ENCODE measurements at regions of chr13 and their contacts with region 1.

Region 1: GRCh38 chr13:103006641-103007426 is 59.4 kb downstream of the SLC10A2 start:
- DNase-seq: no peak
- ATAC-seq: peak; percentile 83
- H3K4me3 Mint-ChIP-seq: peak overlapping the region; percentile 70
- H3K27ac Mint-ChIP-seq: peak overlapping the region; percentile 83
- H3K4me1 Mint-ChIP-seq: peaks cover 30% of the 10 kb centered on the region
- H3K27me3 Mint-ChIP-seq: no peaks in the 10 kb centered on the region
- CTCF ChIP-seq: no peak

Region 2: DNA sequence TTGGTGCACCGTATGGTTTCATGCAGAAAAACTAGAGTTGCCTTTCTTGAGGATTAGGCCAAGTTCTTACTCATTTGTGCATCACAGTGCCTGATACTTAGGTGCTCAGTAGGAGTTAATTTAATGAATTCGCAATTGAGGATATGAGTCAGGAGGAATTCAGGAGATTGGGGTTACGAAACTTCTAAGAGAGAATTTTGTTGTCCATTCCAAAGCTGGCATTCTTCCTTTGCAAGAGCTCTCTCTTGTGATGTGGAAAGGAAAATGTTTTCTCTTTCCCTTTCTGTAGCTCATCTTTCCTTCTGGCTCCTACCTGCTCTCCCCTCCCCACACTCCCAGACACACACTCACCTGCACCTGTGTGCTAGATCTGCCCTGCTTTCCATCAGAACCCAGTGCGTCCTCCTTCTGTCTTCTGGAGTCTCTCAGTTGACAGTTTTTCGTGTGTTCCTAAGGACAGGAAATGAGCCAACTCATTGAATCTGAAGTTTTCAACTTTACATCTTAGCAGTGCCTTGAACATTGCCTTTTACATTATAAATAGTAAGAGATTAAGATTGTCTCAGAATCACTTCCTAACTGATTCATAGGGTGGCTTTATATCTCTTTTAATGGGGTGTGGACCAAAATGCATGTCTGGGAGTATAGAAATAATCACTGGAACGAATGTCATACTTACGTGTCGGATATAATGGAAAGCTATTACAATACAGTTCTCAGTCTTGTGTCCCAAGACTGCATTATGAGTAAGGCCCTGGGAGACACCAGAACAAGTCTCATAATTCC is 180.7 kb before region 1 on chr13:
- CTCF ChIA-PET with region 1: no interaction called
- POLR2A ChIA-PET with region 1: no interaction called
- intact Hi-C with region 1: no loop called
- DNase-seq: no peak
- ATAC-seq: no peak
- H3K4me3 Mint-ChIP-seq: no peak overlapping the region
- H3K27ac Mint-ChIP-seq: no peak overlapping the region
- H3K4me1 Mint-ChIP-seq: no peaks in the 10 kb centered on the region
- H3K27me3 Mint-ChIP-seq: no peaks in the 10 kb centered on the region
- CTCF ChIP-seq: no peak

Region 3: DNA sequence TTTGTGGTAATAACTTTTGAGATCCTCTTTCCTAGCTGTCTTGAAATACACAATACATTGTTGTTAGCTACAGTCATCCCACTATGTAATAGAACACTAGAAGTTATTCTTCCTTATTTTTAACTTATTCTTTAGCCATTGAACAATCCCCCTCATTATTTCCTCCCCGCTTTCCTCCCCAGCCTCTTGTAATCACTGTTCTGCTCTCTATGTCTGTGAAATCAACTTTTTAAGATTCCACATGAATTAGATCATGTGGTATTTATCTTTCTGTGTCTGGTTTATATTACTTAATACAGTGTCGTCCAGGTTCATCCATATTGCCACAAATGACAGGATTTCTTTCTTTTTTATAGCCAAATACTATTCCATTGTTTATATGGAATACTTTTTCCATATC is 13.5 kb before region 1 on chr13:
- CTCF ChIA-PET with region 1: no interaction called
- POLR2A ChIA-PET with region 1: no interaction called
- intact Hi-C with region 1: no loop called
- DNase-seq: no peak
- ATAC-seq: no peak
- H3K4me3 Mint-ChIP-seq: no peak overlapping the region
- H3K27ac Mint-ChIP-seq: no peak overlapping the region
- H3K4me1 Mint-ChIP-seq: no peaks in the 10 kb centered on the region
- H3K27me3 Mint-ChIP-seq: no peaks in the 10 kb centered on the region
- CTCF ChIP-seq: no peak

Region 4: DNA sequence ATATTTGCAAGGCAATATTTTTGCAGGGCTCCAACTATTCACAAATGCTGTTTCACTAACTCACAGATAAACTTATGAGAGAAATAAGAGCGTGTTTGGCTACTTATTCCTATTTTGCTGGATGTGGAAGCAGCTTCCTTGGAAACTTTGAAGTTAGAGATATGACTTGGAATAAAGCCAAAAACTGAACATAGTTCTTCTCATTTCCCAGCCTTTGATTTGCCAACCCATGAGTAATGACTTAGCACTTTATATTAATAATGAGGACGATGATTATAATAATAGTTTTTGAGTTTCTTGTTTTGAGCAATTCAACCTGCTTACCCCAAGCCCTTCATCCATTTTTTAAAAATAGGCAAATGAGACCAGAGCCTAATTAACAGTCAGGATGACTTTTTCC is 11.7 kb after region 1 on chr13:
- CTCF ChIA-PET with region 1: no interaction called
- POLR2A ChIA-PET with region 1: no interaction called
- intact Hi-C with region 1: no loop called
- DNase-seq: no peak
- ATAC-seq: no peak
- H3K4me3 Mint-ChIP-seq: no peak overlapping the region
- H3K27ac Mint-ChIP-seq: no peak overlapping the region
- H3K4me1 Mint-ChIP-seq: no peaks in the 10 kb centered on the region
- H3K27me3 Mint-ChIP-seq: no peaks in the 10 kb centered on the region
- CTCF ChIP-seq: no peak

Region 5: GRCh38 chr13:103031332-103031873 is 24.6 kb after region 1 on chr13:
- CTCF ChIA-PET with region 1: no interaction called
- POLR2A ChIA-PET with region 1: no interaction called
- intact Hi-C with region 1: loop called (anchors 2 kb)
- DNase-seq: no peak
- ATAC-seq: peak; percentile 58
- H3K4me3 Mint-ChIP-seq: peak overlapping the region; percentile 21
- H3K27ac Mint-ChIP-seq: peak overlapping the region; percentile 62
- H3K4me1 Mint-ChIP-seq: peaks cover 45% of the 10 kb centered on the region
- H3K27me3 Mint-ChIP-seq: no peaks in the 10 kb centered on the region
- CTCF ChIP-seq: no peak

Region 6: GRCh38 chr13:103203735-103204330 is 197.0 kb after region 1 on chr13:
- CTCF ChIA-PET with region 1: no interaction called
- POLR2A ChIA-PET with region 1: no interaction called
- intact Hi-C with region 1: no loop called
- DNase-seq: no peak
- ATAC-seq: no peak
- H3K4me3 Mint-ChIP-seq: no peak overlapping the region
- H3K27ac Mint-ChIP-seq: no peak overlapping the region
- H3K4me1 Mint-ChIP-seq: no peaks in the 10 kb centered on the region
- H3K27me3 Mint-ChIP-seq: no peaks in the 10 kb centered on the region
- CTCF ChIP-seq: no peak

Measured in activated B cell treated with CpG ODN at 0.5 μM for 24 hours (primary cell).